K562 (cell line): ENCODE measurements at regions of chrX and their contacts with region 1.

Region 1: DNA sequence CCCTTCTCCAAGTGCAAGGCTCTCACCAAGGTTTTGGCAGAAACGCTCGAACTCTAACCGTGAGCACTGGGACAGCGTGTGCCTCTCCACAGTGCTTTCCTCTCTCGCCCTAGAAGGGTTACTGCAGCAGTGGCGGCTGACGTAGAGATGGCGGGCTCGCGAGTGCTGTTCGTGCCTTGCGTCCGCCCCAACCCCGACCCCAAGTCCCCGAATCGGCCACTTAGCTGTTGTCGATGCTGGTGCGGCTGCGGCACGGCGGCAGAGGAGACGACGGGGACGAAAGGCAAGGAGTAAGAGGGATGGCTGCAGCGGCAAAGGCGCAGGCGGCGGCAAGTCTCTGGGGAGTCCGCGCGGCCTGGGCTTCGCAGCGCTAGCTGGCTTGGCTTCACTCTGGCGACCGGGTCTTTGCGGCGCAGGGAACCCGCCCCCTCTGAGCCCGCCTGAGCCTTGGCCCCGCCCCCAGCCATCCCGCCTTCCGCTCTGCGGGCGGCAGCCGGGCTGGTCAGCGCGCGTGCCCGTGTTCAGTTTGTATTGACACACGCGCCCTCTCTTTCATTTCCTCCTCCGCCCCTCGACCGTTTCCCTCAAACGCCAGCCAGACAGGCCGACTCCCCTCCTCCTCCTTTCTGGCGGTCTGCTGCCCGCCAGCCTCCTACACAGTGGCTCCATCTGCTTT is at the start of gene SPIN4:
- DNase-seq: peak; percentile 77 to 90 (median 80)
- ATAC-seq: peak; percentile 95
- H3K4me3 ChIP-seq: peak within 1 kb of the TSS; percentile 54
- H3K27ac ChIP-seq: peak within 1 kb of the TSS; percentile 76
- H3K4me1 ChIP-seq: peaks cover 0 to 2% of the 10 kb centered on the region in 2 experiments; a peak in 2 of 5 replicates
- H3K27me3 ChIP-seq: no peaks in the 10 kb centered on the region
- CTCF ChIP-seq: no peak
- EP300 ChIP-seq: peak; percentile 14; the same call in 1 of the 2 replicates
- POLR2A ChIP-seq: peak; percentile 75
- RAD21 ChIP-seq: no peak
- polyA plus RNA-seq, gene SPIN4: 9.0 to 12.6 TPM

Region 2: DNA sequence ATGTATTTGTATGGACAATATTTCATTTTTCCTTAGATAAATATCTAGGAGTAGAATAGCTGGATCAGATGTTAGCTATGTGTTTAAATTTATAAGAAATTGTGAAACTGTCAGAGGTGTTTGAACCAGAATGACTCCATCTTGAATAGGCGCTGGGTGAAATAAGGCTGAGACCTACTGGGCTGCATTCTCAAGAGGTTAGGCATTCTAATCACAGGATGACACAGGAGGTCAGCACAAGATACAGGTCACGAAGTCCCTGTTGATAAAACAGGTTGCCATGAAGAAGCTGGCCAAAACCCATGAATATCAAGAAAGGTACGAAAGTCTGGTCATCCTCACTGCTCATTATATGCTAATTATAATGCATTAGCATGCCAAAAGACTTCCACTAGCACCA is 36.3 kb after region 1 on chrX:
- CTCF ChIA-PET with region 1: no interaction called
- POLR2A ChIA-PET with region 1: no interaction called
- in situ Hi-C with region 1: no loop called
- intact Hi-C with region 1: loop called (anchors 5 kb)
- DNase-seq: no peak
- ATAC-seq: no peak
- H3K4me3 ChIP-seq: no peak overlapping the region
- H3K27ac ChIP-seq: no peak overlapping the region
- H3K4me1 ChIP-seq: no peaks in the 10 kb centered on the region
- H3K27me3 ChIP-seq: no peaks in the 10 kb centered on the region
- CTCF ChIP-seq: no peak
- EP300 ChIP-seq: no peak
- POLR2A ChIP-seq: no peak
- RAD21 ChIP-seq: no peak

Region 3: DNA sequence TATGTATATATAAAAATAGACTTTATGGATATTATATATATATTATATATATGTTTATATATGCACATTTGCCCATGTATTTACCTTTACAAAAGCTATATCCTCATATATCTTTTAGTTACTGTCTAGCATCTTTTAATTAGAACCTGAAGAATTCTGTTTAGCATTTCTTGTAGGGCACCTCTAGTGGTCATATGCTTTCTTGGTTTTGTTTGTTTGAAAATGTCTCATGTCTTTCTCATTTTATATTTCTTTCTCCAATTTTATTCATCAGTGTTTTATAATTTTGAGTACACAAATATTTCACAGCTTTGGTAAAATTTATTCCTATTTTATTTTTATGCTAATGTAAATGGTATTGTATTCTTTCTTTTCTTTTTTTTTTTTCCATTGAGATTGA is 70.3 kb after region 1 on chrX:
- CTCF ChIA-PET with region 1: no interaction called
- POLR2A ChIA-PET with region 1: no interaction called
- in situ Hi-C with region 1: no loop called
- intact Hi-C with region 1: loop called (anchors 10 kb)
- DNase-seq: no peak
- ATAC-seq: no peak
- H3K4me3 ChIP-seq: no peak overlapping the region
- H3K27ac ChIP-seq: no peak overlapping the region
- H3K4me1 ChIP-seq: no peaks in the 10 kb centered on the region; a peak in 1 of 5 replicates
- H3K27me3 ChIP-seq: no peaks in the 10 kb centered on the region
- CTCF ChIP-seq: no peak
- EP300 ChIP-seq: no peak
- POLR2A ChIP-seq: no peak
- RAD21 ChIP-seq: no peak